ENCODE measurements at regions of chr14 and their contacts with region 1.

Region 1: DNA sequence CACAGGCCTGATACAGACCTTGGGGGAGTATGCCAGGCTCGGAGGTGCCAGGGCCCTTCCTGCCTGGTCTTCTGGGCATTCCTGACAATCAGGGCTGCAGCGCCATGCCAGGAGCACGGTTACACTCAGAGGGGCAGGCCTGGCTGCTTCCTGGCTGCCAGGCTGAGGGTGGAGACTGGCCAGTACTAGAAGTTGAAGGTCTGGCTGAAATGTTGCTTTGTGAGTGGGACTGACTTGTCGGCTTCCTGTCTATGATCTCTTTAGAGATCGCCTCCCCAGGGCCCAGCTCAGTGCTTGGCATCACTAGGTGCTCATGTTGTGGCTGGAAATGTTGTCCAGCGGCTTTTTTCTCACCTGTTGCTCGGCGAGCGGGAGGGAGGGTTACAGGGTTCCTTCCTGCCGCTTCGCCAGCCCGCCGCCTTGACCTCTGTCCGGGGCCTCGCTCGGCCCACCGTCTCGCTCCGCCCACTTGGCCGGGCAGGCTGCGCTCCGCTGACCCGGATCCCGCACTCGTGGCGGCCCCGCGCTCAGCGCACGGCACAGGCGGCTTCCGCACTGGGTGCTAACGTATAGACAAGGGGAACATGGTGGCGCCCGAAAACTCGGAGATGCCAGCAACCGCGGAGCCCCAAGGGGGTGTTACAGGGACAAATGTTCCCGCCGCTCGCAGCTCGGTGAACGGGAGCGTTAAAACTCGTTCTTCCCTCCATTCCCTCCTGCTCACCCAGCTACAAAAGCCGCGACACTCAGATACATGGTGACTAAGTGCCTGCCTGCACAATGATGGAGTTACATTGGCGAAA is 32.6 kb downstream of the PAPLN start:
- DNase-seq: peak; percentile 40
- ATAC-seq: peak; percentile 88
- H3K4me3 Mint-ChIP-seq: peak overlapping the region; percentile 85
- H3K27ac Mint-ChIP-seq: peak overlapping the region; percentile 57
- H3K4me1 Mint-ChIP-seq: peaks cover 25% of the 10 kb centered on the region
- H3K27me3 Mint-ChIP-seq: no peaks in the 10 kb centered on the region
- CTCF ChIP-seq: no peak

Region 2: GRCh38 chr14:73153272-73153671 is 116.7 kb before region 1 on chr14:
- CTCF ChIA-PET with region 1: no interaction called
- POLR2A ChIA-PET with region 1: no interaction called
- intact Hi-C with region 1: no loop called
- DNase-seq: no peak
- ATAC-seq: no peak
- H3K4me3 Mint-ChIP-seq: no peak overlapping the region
- H3K27ac Mint-ChIP-seq: no peak overlapping the region
- H3K4me1 Mint-ChIP-seq: no peaks in the 10 kb centered on the region
- H3K27me3 Mint-ChIP-seq: no peaks in the 10 kb centered on the region
- CTCF ChIP-seq: no peak

Region 3: DNA sequence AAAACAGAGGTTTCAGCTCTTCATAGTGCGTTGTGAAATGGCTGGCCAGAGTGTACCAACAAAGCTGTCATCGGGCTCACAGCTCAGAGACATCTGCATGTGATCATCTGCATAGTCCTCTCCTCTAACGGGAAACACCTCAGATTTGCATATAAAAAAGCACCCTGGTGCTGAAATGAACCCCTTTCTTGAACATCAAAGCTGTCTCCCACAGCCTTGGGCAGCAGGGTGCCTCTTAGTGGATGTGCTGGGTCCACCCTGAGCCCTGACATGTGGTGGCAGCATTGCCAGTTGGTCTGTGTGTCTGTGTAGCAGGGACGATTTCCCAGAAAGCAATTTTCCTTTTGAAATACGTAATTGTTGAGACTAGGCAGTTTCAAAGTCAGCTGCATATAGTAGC is 46.9 kb before region 1 on chr14:
- CTCF ChIA-PET with region 1: no interaction called
- POLR2A ChIA-PET with region 1: no interaction called
- intact Hi-C with region 1: loop called (anchors 5 kb)
- DNase-seq: no peak
- ATAC-seq: peak; percentile 64
- H3K4me3 Mint-ChIP-seq: no peak overlapping the region
- H3K27ac Mint-ChIP-seq: peak overlapping the region; percentile 5
- H3K4me1 Mint-ChIP-seq: peaks cover 12% of the 10 kb centered on the region
- H3K27me3 Mint-ChIP-seq: no peaks in the 10 kb centered on the region
- CTCF ChIP-seq: no peak

Region 4: GRCh38 chr14:73245401-73246325 is 24.3 kb before region 1 on chr14:
- CTCF ChIA-PET with region 1: no interaction called
- POLR2A ChIA-PET with region 1: no interaction called
- intact Hi-C with region 1: loop called (anchors 1 kb)
- DNase-seq: peak; percentile 65
- ATAC-seq: peak; percentile 87
- H3K4me3 Mint-ChIP-seq: peak overlapping the region; percentile 81
- H3K27ac Mint-ChIP-seq: peak overlapping the region; percentile 30
- H3K4me1 Mint-ChIP-seq: peaks cover 67% of the 10 kb centered on the region
- H3K27me3 Mint-ChIP-seq: peaks cover 15% of the 10 kb centered on the region
- CTCF ChIP-seq: no peak

Measured in activated B cell treated with CpG ODN at 0.5 μM for 24 hours (primary cell).